Breast epithelium (tissue), 4 donors: ENCODE measurements at regions of chr12 and their contacts with region 1.

Region 1: DNA sequence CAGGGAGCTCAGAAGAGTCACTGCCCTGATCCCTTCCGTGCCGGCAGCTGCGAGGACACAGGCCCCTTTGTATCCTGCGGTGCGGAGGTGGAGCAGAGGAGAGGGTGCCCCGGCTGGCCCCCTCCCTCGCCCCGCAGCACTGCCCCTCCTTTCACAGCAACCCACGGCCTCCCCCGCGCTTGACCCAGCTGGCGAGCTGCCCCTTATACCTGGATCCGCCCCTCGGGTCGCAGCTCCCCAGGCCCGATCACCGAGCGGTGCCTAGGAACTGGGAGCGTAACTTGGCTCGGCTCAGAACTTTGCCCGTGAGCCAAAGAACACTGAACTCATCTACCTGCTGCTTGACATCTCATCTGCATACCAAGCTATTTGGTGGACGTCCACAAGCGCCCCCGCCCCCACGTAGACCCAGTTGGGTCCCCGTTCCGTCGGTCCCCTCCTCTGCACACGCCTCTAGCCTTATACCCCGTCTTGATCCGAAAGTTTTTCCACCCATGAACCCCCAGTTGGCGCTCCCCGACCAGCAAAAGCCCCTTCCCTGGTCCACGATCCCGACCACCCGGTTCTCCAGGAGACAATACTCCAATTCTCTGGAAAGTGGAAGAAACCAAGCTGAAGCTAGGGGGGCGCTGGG is 697 bp upstream of the DNAJC14 start:
- DNase-seq: peak in 1 of 2 donors; percentile 65
- H3K4me3 ChIP-seq: peak overlapping the region; percentile 91 to 98 (median 91)
- H3K27ac ChIP-seq: peak overlapping the region; percentile 94 to 95
- H3K4me1 ChIP-seq: peaks cover 6 to 15% of the 10 kb centered on the region in 2 donors
- H3K27me3 ChIP-seq: no peaks in the 10 kb centered on the region
- CTCF ChIP-seq: no peak
- POLR2A ChIP-seq: no peak

Region 2: DNA sequence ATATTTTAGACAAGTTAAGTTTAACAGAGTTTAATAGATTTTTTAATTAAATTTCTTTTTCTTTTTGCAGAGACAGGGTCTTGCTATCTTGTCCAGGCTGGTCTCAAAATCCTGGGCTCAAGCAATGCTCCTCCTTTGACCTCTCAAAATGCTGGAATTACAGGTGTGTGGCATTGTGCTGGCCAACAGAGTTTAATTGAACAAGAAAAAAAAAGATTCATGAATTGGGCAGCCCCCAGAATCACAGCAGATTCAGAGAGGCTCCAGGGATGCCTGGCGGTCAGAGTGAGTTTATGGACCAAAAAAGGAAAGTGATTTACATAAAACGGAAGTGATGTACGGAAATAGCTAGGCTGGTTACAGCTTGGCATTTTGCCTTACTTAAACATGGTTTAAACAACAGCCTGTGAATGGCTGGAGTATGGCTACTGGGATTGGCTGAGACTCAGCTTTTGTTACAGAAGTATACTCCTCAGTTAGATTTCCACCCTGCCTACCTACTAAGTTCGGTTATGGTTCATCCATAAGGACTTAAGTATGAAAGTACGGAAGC is 831.0 kb before region 1 on chr12:
- intact Hi-C with region 1: no loop called
- DNase-seq: no peak
- H3K4me3 ChIP-seq: no peak overlapping the region
- H3K27ac ChIP-seq: no peak overlapping the region
- H3K4me1 ChIP-seq: no peaks in the 10 kb centered on the region
- H3K27me3 ChIP-seq: no peaks in the 10 kb centered on the region
- CTCF ChIP-seq: no peak
- POLR2A ChIP-seq: no peak

Region 3: DNA sequence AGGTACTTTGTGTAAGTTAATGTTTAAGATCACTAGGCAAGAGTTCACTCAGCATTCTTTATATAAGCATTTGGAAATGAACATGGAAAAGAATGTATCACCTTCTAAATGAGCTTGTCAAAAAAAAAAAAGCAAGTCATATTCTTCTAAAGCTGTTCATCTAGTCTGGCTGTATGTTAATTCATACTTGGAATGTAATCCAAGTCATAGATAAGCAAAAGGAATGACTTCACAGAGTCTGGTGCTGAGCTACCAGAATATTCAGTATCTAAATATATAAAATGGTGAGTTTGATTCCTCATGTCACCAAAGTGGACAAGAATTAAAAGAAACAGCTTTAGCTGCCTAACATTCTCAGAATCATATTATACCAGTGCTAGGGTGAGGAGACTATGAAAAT is 275.8 kb before region 1 on chr12:
- intact Hi-C with region 1: no loop called
- DNase-seq: no peak
- H3K4me3 ChIP-seq: no peak overlapping the region
- H3K27ac ChIP-seq: no peak overlapping the region
- H3K4me1 ChIP-seq: no peaks in the 10 kb centered on the region
- H3K27me3 ChIP-seq: no peaks in the 10 kb centered on the region
- CTCF ChIP-seq: no peak
- POLR2A ChIP-seq: no peak

Region 4: DNA sequence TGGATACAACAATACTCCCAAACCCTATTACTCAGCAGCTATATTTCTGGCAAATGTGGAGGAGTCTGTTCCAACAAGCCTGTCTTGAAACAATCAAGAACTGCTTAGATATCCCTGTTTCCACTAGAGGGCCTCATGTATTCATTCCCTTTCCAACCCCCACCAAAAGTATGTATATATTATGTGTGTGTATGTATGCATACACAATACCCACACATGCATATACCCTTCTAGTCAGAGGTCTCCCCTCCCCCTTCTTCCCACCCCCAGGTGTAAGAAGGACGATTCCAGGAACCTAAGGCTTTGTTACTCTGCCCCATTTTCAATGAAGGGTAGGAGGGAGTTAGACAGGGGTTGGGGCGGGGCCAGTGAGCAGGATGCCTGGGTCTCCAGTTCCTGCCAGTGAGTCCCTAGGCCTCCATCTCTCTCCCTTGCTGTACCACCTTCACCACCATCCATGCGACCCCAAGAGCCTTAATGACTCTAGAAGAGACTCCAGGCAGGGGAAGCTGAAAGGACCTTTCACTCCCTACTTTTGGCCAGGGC is 100.8 kb after region 1 on chr12 and contains the start of gene DGKA:
- intact Hi-C with region 1: loop called (anchors 10 kb)
- DNase-seq: no peak
- H3K4me3 ChIP-seq: peak within 1 kb of the TSS; percentile 66 to 96 (median 79)
- H3K27ac ChIP-seq: peak within 1 kb of the TSS; percentile 85 to 89
- H3K4me1 ChIP-seq: peaks cover 4 to 20% of the 10 kb centered on the region in 2 donors
- H3K27me3 ChIP-seq: no peaks in the 10 kb centered on the region
- CTCF ChIP-seq: peak; percentile 23 to 38 (median 31)
- POLR2A ChIP-seq: no peak
- total RNA-seq, gene DGKA: 25.1 to 50.5 (median 44.2) TPM

Region 5: DNA sequence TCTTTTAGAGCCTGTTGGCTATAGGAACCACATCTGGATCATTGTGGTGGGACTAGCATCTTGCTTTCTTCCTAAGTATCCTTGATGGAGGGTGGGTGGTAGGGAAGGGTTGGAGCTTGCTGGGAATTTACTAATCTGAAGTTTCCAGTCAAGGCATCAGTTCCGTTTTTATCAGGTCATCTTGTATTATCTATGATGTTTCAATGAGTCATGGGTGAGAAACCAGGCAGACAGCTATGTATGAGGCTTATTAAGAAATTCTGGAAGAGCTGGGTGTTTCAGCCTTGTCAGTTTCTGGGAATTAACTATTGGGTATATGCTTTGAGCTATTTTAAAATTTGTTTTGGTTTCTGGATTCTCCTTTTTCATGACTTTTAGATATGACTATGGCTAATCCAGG is 1963.8 kb after region 1 on chr12:
- intact Hi-C with region 1: no loop called
- DNase-seq: no peak
- H3K4me3 ChIP-seq: no peak overlapping the region
- H3K27ac ChIP-seq: peak overlapping the region in 1 of 2 donors; percentile 13
- H3K4me1 ChIP-seq: no peaks in the 10 kb centered on the region
- H3K27me3 ChIP-seq: no peaks in the 10 kb centered on the region
- CTCF ChIP-seq: no peak
- POLR2A ChIP-seq: no peak